ENCODE measurements at regions of chr12 and their contacts with region 1.

Region 1: GRCh38 chr12:72271451-72272090 is 599 bp upstream of the TRHDE start:
- DNase-seq: peak; percentile 91
- H3K4me3 ChIP-seq: peak overlapping the region; percentile 80
- H3K27ac ChIP-seq: peak overlapping the region; percentile 87
- H3K4me1 ChIP-seq: peaks cover 35% of the 10 kb centered on the region
- H3K27me3 ChIP-seq: no peaks in the 10 kb centered on the region
- CTCF ChIP-seq: peak; percentile 47

Region 2: DNA sequence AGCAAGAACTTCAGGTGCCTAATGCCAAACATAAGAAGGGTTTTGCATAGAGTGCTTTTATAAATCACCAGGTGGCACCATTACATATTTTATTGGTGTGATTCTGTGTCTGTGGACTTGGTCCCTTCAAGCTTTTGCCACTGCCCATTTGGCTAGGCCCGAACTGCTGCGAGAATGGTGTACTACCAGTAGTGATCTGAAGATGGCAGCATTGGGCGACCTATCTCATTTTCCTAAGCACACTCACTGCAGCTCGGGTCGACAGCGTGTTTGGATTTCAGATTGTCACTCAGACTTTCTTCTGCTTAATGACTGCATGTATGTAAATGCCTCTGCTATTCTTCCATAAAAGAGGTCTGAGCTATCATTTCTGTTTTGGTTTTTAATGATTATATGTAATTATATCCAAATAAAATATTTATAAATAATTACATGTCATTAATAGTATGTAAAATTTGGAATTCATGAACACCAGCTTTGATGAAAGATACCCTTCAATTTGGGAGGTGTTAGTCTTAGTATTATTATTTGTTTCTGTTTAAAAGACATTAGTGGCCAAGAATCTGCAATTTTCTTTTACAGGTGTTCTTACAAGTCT is 254.4 kb before region 1 on chr12:
- CTCF ChIA-PET with region 1: interaction called, 5 read pairs
- POLR2A ChIA-PET with region 1: no interaction called
- intact Hi-C with region 1: loop called (anchors 1 kb)
- DNase-seq: peak; percentile 88
- H3K4me3 ChIP-seq: no peak overlapping the region
- H3K27ac ChIP-seq: no peak overlapping the region
- H3K4me1 ChIP-seq: peaks cover 10% of the 10 kb centered on the region
- H3K27me3 ChIP-seq: no peaks in the 10 kb centered on the region
- CTCF ChIP-seq: peak; percentile 88

Region 3: GRCh38 chr12:72346363-72346944 is 74.9 kb after region 1 on chr12:
- CTCF ChIA-PET with region 1: no interaction called
- POLR2A ChIA-PET with region 1: interaction called, 3 read pairs
- intact Hi-C with region 1: loop called (anchors 5 kb)
- DNase-seq: peak; percentile 95
- H3K4me3 ChIP-seq: no peak overlapping the region
- H3K27ac ChIP-seq: no peak overlapping the region
- H3K4me1 ChIP-seq: peaks cover 32% of the 10 kb centered on the region
- H3K27me3 ChIP-seq: no peaks in the 10 kb centered on the region
- CTCF ChIP-seq: peak; percentile 74

Region 4: GRCh38 chr12:74170645-74171477 is 1899.3 kb after region 1 on chr12:
- CTCF ChIA-PET with region 1: no interaction called
- POLR2A ChIA-PET with region 1: no interaction called
- intact Hi-C with region 1: no loop called
- DNase-seq: no peak
- H3K4me3 ChIP-seq: no peak overlapping the region
- H3K27ac ChIP-seq: no peak overlapping the region
- H3K4me1 ChIP-seq: no peaks in the 10 kb centered on the region
- H3K27me3 ChIP-seq: no peaks in the 10 kb centered on the region
- CTCF ChIP-seq: no peak